AG04450 (cell line): ENCODE measurements at regions of chr1 and their contacts with region 1.

Region 1: GRCh38 chr1:193121616-193122593 is at the start of gene CDC73:
- DNase-seq: peak; percentile 90
- H3K4me3 ChIP-seq: peak within 1 kb of the TSS; percentile 91
- H3K27ac ChIP-seq: peak within 1 kb of the TSS; percentile 91
- H3K27me3 ChIP-seq: no peaks in the 10 kb centered on the region
- CTCF ChIP-seq: peak; percentile 88
- polyA plus RNA-seq, gene CDC73: 40.2 and 56.4 TPM in 2 replicates

Region 2: GRCh38 chr1:193025218-193025617 is 96.7 kb before region 1 on chr1:
- CTCF ChIA-PET with region 1: no interaction called
- POLR2A ChIA-PET with region 1: no interaction called
- DNase-seq: no peak
- H3K4me3 ChIP-seq: no peak overlapping the region
- H3K27ac ChIP-seq: no peak overlapping the region
- H3K27me3 ChIP-seq: no peaks in the 10 kb centered on the region
- CTCF ChIP-seq: no peak

Region 3: GRCh38 chr1:193104906-193105820 is 16.7 kb before region 1 on chr1 and contains the start of gene GLRX2:
- CTCF ChIA-PET with region 1: interaction called, 46 read pairs
- POLR2A ChIA-PET with region 1: interaction called, 41 read pairs
- DNase-seq: peak; percentile 52
- H3K4me3 ChIP-seq: peak within 1 kb of the TSS; percentile 79
- H3K27ac ChIP-seq: peak within 1 kb of the TSS; percentile 87
- H3K27me3 ChIP-seq: no peaks in the 10 kb centered on the region
- CTCF ChIP-seq: no peak; the same call in 1 of the 2 replicates
- polyA plus RNA-seq, gene GLRX2: 20.9 and 33.5 TPM in 2 replicates

Region 4: GRCh38 chr1:193110246-193110645 is 11.7 kb before region 1 on chr1:
- CTCF ChIA-PET with region 1: interaction called, 46 read pairs
- POLR2A ChIA-PET with region 1: interaction called, 41 read pairs
- DNase-seq: no peak
- H3K4me3 ChIP-seq: no peak overlapping the region
- H3K27ac ChIP-seq: no peak overlapping the region
- H3K27me3 ChIP-seq: no peaks in the 10 kb centered on the region
- CTCF ChIP-seq: no peak